ENCODE measurements at regions of chr13 and their contacts with region 1.

Region 1: DNA sequence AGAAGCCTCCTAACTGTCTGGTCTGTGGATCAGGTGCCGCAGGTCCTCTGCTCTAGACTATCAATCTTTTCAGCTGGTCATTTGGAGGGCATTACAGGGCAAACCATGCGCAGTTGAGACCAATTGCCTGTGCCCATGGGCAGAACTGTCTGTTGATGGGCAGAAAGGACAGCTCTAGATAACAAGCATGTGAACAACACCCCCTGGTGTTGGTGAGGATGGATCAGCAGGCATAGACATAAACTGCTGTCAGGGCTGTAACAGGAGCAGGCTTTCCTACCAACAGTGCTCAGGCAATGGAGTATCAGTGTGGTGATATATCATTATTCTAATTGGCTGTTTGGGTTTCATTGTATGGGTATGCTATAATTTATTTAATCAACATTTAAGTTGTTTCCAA is 104.7 kb upstream of the KL start:
- DNase-seq: peak; percentile 59
- CTCF ChIP-seq: peak; percentile 46

Region 2: DNA sequence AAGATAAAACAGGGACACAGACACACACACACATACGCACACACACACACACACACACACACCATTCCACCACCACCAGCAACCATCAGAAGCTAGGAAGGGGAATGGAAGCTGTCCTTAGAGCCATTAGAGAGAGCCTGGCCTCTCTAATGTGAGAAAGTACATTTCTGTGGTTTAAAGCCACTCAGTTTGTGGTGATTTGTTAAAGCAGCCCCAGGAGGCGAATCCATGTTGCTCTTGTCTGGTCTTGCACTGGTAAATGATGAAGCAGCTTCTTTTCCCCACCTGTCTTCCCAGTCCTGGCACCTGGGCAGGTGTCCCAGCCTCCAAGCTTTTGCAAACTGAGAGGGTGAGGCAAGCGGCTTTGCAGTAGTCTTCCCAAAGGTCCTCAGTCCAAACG is 14.2 kb before region 1 on chr13:
- CTCF ChIA-PET with region 1: interaction called, 12 read pairs
- POLR2A ChIA-PET with region 1: no interaction called
- DNase-seq: no peak
- CTCF ChIP-seq: no peak

Region 3: DNA sequence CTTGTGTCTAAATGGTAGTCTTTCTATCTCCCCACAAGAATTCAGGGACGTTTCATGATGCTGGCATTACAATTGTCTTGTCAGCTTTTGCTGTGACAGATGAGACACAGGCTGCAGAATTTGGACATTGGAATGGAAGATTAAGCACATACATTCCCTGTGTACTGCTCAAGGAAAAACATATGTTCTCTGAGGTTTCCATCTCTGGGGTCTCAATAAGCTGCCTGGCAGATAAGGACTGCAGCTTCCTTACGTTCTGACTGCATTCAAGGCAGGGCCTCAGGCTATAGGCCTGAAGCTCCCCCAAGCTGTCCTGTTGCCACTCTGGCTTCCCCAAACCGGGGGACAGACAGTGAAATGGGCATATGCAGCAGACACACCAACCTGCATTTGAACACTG is 13.4 kb after region 1 on chr13:
- CTCF ChIA-PET with region 1: interaction called, 24 read pairs
- POLR2A ChIA-PET with region 1: no interaction called
- DNase-seq: no peak
- CTCF ChIP-seq: no peak

Region 4: GRCh38 chr13:32947411-32948276 is 36.1 kb after region 1 on chr13:
- CTCF ChIA-PET with region 1: no interaction called
- POLR2A ChIA-PET with region 1: no interaction called
- DNase-seq: no peak
- CTCF ChIP-seq: no peak

Region 5: GRCh38 chr13:33090755-33091414 is 179.4 kb after region 1 on chr13:
- CTCF ChIA-PET with region 1: no interaction called
- POLR2A ChIA-PET with region 1: no interaction called
- DNase-seq: no peak
- CTCF ChIP-seq: no peak

Measured in GM10248 (cell line).